Tibial artery (tissue), 4 donors: ENCODE measurements at regions of chr17 and their contacts with region 1.

Region 1: DNA sequence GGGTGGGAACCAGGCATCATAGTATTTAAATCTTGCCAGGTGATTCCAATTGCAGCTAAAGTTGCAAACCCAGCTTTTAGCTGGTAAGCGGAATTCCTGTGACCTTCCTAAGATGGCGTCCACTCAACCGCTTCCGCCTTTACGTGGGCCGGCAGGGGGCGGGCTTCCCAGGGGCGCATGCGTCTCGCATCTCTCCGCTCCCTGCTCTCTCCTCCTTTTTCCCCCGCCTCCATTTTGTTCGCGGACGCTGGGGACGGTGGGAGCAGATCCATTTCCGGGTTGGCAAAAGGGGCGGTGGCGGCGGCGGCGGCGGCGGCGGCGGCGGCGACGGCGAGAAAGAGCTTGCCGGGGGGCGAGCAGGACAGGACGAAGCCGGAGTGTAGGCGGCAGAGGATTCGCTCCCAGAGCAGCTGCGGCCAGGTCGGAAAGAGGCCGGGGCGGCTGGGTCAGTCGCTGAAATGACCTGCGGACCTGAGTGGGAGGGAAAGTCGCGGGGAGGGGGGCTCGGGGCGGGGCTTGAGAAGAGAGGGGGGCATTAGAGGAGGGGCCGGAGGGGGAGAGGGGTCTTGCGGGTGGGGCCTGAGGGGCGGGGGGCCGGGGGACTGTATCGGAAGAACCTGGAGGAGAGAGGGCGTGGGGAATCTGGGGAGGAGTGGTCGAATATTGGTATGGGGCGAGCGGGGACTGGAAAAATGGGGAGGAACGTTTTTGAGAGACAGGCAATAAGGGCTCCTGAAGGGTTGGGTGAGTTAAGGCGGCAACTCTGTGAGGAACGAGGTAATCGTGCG is at the start of gene WIPF2:
- DNase-seq: peak; percentile 96 to 98
- H3K4me3 ChIP-seq: peak within 1 kb of the TSS; percentile 79 to 84
- H3K27ac ChIP-seq: peak within 1 kb of the TSS; percentile 94 to 95
- H3K4me1 ChIP-seq: peaks cover 0 to 26% (median 8%) of the 10 kb centered on the region in 4 donors
- H3K27me3 ChIP-seq: no peaks in the 10 kb centered on the region
- CTCF ChIP-seq: peak; percentile 72 to 79

Region 2: GRCh38 chr17:39605492-39606433 is 613.5 kb before region 1 on chr17:
- intact Hi-C with region 1: loop called (anchors 10 kb)
- DNase-seq: no peak
- H3K4me3 ChIP-seq: peak overlapping the region in 1 of 2 donors; percentile 9
- H3K27ac ChIP-seq: no peak overlapping the region
- H3K4me1 ChIP-seq: peaks cover 0 to 42% (median 33%) of the 10 kb centered on the region in 4 donors
- H3K27me3 ChIP-seq: peaks cover 15 to 88% of the 10 kb centered on the region in 2 donors
- CTCF ChIP-seq: no peak

Region 3: DNA sequence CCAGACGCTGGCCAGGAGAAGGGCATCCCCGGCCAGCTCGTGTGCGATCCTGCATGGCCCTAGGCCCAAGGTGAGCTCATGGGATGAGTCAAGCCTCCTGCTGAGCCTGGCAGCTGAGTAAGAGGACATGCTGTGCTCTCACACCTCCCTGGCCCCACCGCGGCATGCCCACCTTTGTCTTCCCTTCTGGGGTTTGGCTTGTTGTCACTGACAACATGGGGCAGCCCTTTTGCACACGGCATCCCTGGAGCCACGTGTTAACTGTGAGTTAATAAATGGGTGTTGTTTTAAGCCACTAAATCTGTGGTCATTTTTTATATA is 291.0 kb after region 1 on chr17:
- intact Hi-C with region 1: no loop called
- DNase-seq: peak in 1 of 2 donors; percentile 27
- H3K4me3 ChIP-seq: no peak overlapping the region
- H3K27ac ChIP-seq: no peak overlapping the region
- H3K4me1 ChIP-seq: peaks cover 0 to 10% (median 3%) of the 10 kb centered on the region in 4 donors
- H3K27me3 ChIP-seq: no peaks in the 10 kb centered on the region
- CTCF ChIP-seq: no peak